ENCODE measurements at regions of chr1 and their contacts with region 1.

Region 1: DNA sequence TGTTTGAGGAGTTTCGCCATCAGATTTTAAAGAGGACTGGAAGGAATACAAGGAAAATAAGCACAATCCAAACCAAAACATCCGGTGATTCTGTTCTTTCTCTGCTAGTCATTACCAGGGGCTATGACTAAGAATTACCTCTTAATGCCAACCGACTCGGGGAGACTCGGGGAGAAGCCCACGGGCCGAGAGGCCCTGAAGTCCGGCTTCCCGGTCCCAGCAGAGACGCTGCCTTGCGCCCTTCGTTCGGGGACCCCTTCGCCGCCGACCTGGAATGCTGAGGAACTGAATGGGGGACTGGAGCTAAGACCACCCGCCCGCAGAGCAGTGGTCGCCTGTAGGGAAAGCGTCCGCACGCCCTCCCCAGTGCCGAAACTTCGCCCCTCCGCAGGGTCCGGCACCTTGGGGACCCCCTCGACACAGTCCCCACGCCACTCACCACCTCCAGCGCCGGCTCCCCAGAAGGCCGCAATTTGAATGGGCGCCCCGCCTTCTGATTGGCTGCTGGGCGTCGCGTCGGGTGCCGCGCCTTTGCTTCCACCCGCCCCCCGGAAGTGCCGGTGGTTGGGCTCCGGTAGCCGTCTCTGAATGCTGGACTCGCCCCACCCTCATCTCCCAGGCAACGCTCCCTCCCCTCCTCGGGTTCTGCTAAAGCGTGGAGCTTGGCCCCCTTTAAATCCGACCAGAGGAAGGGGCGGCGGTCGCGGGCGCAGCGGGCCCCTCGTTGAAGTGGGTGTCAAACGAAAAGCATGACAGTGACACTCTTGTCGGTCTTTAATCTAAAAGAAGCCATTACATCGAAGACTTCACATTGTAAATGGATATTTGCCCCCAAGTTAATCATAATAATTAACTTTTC is at the start of gene KIF14:
- DNase-seq: no peak
- H3K4me3 ChIP-seq: peak within 1 kb of the TSS; percentile 88
- CTCF ChIP-seq: no peak

Region 2: DNA sequence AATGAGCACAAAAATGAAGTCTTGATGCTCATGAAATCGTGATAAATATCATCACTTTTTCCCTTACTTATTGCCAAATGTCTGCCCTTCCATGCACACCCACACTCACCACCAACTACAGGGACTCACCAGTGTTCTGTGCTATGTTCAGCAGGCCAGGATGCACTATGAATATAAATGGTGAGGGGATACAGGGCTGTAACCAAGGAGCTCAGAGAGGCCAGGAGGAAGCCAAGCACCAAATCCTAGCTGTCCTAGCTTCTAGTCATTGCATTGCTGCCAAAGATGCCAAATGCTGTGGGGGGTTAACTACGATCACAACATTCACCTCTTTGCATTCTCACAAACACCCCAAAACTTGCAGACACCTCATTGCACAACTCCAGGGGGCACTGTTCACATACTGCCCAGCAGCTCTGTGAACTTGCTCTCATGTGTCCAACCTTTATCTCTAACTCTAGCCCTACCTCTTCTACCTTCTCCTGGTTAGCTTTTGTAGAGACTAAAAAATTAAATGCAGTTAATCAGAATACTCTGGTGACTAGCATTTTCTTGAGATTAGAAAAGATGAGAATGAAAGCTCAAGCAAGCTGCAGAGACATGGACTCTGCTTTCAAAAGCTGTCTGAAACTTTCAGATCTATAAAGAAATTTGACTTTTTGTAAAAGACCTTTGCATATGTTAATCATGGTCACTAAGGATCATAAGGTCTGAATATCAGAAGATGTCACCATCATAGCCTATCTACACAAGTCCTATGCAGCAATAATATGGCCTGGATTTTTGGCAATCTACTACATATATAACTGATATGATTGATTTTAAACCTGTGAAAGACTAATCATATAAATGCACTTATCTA is 14.0 kb after region 1 on chr1:
- CTCF ChIA-PET with region 1: interaction called, 52 read pairs
- POLR2A ChIA-PET with region 1: interaction called, 5 read pairs
- DNase-seq: no peak
- H3K4me3 ChIP-seq: no peak overlapping the region
- CTCF ChIP-seq: no peak

Region 3: DNA sequence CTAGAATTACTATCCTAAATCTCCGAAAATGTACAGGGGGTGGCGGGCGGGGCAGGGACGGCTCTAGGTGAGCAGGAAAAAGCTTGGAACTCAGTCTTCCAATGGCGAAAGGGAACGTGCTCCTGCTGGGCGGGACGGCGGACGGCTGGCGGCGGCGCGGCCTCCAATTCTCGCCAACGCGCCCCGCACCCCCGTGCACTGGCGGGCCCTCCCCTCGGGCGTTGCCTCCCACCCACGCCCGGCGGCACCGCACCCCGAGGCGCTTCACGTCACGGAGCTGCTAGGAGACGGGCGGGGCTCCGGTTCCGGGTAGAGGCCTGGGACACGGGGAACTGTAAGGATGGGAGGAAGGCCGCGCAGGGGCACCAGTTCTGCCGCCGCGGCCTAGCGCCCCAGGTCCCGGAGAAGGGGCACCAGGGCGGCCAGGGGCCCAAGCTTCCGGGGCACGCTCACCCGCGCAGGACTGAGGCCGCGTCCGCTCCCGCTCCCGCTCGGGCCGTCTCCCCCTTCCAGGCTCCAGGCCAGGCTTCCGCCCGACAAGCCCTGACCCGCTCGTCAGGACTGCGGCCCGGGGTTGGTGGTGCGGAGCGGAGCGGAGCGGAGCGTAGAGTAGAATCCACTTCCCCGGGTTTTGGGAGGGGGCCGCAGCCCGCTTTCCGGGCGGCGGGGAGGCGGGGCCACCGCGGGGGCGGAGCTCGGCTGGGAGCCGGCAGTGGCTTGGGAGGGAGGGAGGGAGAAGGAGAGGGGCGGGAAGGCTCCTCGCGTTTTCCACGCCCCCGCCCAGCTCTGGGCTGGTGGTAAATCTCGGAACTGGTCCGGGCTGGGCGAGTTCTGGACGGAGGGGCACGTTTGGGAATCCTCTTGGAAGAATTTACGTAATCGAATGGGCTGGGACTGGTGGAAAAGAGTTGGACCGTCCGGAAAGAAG is 49.1 kb after region 1 on chr1 and contains the start of gene DDX59:
- CTCF ChIA-PET with region 1: interaction called, 13 read pairs
- POLR2A ChIA-PET with region 1: interaction called, 3 read pairs
- DNase-seq: peak; percentile 81
- H3K4me3 ChIP-seq: peak within 1 kb of the TSS; percentile 95
- CTCF ChIP-seq: no peak

Region 4: DNA sequence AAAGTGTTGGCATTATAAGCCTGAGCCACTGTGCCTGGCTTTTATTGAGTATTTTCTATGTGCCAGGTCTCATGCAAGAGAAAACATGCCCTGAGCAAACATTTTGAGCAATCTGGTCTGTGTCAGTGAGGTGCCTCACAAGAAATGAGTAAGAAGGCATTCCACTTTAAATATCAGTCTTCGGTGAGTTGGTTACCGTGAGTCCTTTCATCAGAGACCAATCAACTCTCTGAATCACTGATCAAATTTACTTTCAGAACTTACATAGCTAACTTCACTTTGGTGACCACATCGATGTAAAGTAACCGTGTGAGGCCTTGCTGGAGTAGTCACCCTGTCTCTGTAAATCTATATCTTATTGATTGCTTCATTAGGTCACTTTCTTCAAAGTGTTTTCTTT is 63.5 kb after region 1 on chr1:
- CTCF ChIA-PET with region 1: no interaction called
- POLR2A ChIA-PET with region 1: no interaction called
- DNase-seq: no peak
- H3K4me3 ChIP-seq: no peak overlapping the region
- CTCF ChIP-seq: no peak

Region 5: GRCh38 chr1:200780545-200781369 is 160.3 kb after region 1 on chr1:
- CTCF ChIA-PET with region 1: interaction called, 11 read pairs
- POLR2A ChIA-PET with region 1: no interaction called
- DNase-seq: no peak
- H3K4me3 ChIP-seq: peak overlapping the region; percentile 38
- CTCF ChIP-seq: no peak

Region 6: DNA sequence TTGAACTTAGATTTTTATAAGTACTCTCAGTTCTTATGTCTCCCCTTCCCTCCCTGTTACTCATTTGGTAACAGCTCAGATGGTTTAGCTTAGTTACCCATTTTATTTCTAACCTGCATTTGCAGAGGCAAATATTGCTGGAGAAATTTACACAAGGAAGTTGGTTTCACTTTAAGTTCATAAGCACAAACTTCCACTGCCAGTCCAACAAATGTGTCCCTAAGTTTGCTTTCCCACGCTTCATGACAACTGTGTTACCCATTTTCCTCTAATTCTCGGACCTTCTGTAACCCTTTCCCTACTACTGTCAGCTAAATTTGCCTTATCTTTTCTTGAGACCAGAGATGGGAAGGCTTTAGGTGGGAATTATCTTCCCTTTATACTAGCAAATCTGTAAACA is 188.3 kb after region 1 on chr1:
- CTCF ChIA-PET with region 1: interaction called, 167 read pairs
- POLR2A ChIA-PET with region 1: no interaction called
- DNase-seq: no peak
- H3K4me3 ChIP-seq: no peak overlapping the region
- CTCF ChIP-seq: no peak

Region 7: GRCh38 chr1:200845360-200845759 is 224.9 kb after region 1 on chr1:
- CTCF ChIA-PET with region 1: interaction called, 58 read pairs
- POLR2A ChIA-PET with region 1: no interaction called
- DNase-seq: no peak
- H3K4me3 ChIP-seq: no peak overlapping the region
- CTCF ChIP-seq: no peak